GM12878 (cell line): ENCODE measurements at regions of chr1 and their contacts with region 1.

Region 1: GRCh38 chr1:146012737-146013403 is 8.7 kb downstream of the HJV start:
- DNase-seq: no peak
- ATAC-seq: peak; percentile 84
- H3K4me3 ChIP-seq: no peak overlapping the region
- H3K27ac ChIP-seq: no peak overlapping the region
- H3K4me1 ChIP-seq: no peaks in the 10 kb centered on the region
- H3K27me3 ChIP-seq: peaks cover 0 to 1% of the 10 kb centered on the region in 2 experiments; a peak in 3 of 4 replicates
- CTCF ChIP-seq: peak; percentile 68 to 89 (median 76); a peak in 5 of 6 replicates
- EP300 ChIP-seq: no peak
- POLR2A ChIP-seq: no peak
- RAD21 ChIP-seq: peak; percentile 98

Region 2: DNA sequence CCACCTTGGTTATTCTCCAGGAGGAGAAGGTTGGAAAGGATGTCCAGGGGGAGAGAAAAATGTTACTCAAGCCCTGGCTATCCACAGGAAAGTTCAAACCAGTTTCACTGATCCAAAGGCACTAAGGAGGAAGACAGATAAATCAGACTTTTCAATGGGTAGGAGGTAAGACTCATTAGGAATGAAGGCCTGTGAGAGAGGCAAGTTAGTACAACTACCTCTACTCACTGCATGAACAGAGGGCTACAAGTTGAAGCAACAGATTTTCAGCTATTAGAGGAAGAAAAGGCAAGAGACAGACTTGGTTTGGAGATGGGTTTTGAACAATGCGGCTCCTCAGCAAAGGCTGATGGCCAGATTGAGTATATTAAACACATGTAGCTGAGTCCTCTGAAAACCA is 276.7 kb before region 1 on chr1:
- CTCF ChIA-PET with region 1: interaction called, 3 read pairs
- POLR2A ChIA-PET with region 1: no interaction called
- RAD21 ChIA-PET with region 1: interaction called, 4 read pairs
- SMC1A ChIA-PET with region 1: no interaction called
- in situ Hi-C with region 1: no loop called
- intact Hi-C with region 1: loop called (anchors 5 kb)
- DNase-seq: no peak
- ATAC-seq: no peak
- H3K4me3 ChIP-seq: no peak overlapping the region
- H3K27ac ChIP-seq: no peak overlapping the region
- H3K4me1 ChIP-seq: no peaks in the 10 kb centered on the region
- H3K27me3 ChIP-seq: no peaks in the 10 kb centered on the region
- CTCF ChIP-seq: no peak
- EP300 ChIP-seq: no peak
- POLR2A ChIP-seq: no peak
- RAD21 ChIP-seq: no peak

Region 3: GRCh38 chr1:145898756-145899155 is 114.1 kb before region 1 on chr1:
- CTCF ChIA-PET with region 1: interaction called, 27 read pairs
- POLR2A ChIA-PET with region 1: no interaction called
- RAD21 ChIA-PET with region 1: interaction called, 3 read pairs
- SMC1A ChIA-PET with region 1: interaction called, 4 read pairs
- in situ Hi-C with region 1: loop called (anchors 5 kb)
- intact Hi-C with region 1: no loop called
- DNase-seq: no peak
- ATAC-seq: no peak
- H3K4me3 ChIP-seq: no peak overlapping the region
- H3K27ac ChIP-seq: no peak overlapping the region
- H3K4me1 ChIP-seq: no peaks in the 10 kb centered on the region
- H3K27me3 ChIP-seq: no peaks in the 10 kb centered on the region
- CTCF ChIP-seq: no peak
- EP300 ChIP-seq: no peak
- POLR2A ChIP-seq: no peak
- RAD21 ChIP-seq: no peak